ENCODE measurements at regions of chr20 and their contacts with region 1.

Region 1: GRCh38 chr20:45392733-45393132 is 14.6 kb upstream of the TP53TG5 start:
- DNase-seq: no peak
- H3K4me3 ChIP-seq: no peak overlapping the region
- H3K27ac ChIP-seq: no peak overlapping the region
- H3K4me1 ChIP-seq: no peaks in the 10 kb centered on the region
- H3K27me3 ChIP-seq: no peaks in the 10 kb centered on the region
- CTCF ChIP-seq: no peak

Region 2: GRCh38 chr20:45427236-45428149 is 34.8 kb after region 1 on chr20:
- intact Hi-C with region 1: loop called (anchors 5 kb)
- DNase-seq: peak; percentile 75
- H3K4me3 ChIP-seq: no peak overlapping the region
- H3K27ac ChIP-seq: no peak overlapping the region
- H3K4me1 ChIP-seq: no peaks in the 10 kb centered on the region
- H3K27me3 ChIP-seq: no peaks in the 10 kb centered on the region
- CTCF ChIP-seq: no peak